ENCODE measurements at regions of chr18 and their contacts with region 1.

Region 1: GRCh38 chr18:63155169-63155852 is 164.3 kb downstream of the BCL2 start:
- DNase-seq: peak; percentile 91
- H3K4me3 Mint-ChIP-seq: peak overlapping the region; percentile 78
- H3K27ac Mint-ChIP-seq: peak overlapping the region; percentile 98
- H3K4me1 Mint-ChIP-seq: peaks cover 98% of the 10 kb centered on the region
- H3K27me3 Mint-ChIP-seq: no peaks in the 10 kb centered on the region

Region 2: DNA sequence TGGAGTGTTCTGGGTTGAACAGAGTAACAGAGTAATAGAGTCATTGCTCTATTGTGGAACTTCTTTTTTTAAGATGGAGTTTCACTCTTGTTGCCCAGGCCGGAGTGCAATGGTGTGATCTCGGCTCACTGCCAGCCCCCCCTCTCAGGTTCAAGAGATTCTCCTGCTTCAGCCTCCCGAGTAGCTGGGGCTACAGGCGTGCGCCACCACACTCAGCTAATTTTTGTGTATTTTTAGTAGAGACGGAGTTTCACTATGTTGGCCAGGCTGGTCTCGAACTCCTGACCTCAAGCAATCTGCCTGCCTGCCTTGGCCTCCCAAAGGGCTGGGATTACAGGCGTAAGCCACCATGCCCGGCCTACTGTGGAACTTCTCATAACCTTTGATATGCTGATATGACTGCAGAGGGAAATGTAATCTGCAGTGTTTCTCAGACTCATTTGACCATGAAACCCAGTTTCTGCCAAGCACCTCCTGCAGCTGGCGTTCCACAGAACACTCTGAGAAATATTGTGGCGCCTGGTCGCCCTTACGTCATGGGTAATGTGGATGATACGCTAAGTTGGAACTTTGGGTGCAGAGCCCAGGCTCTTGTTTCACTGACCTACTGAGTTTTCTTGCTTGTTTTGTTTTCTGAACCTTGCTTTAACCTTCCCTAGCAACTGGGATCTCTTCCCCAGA is 49.5 kb before region 1 on chr18:
- CTCF ChIA-PET with region 1: no interaction called
- POLR2A ChIA-PET with region 1: interaction called, 5 read pairs
- intact Hi-C with region 1: loop called (anchors 2 kb)
- DNase-seq: peak; percentile 31
- H3K4me3 Mint-ChIP-seq: no peak overlapping the region
- H3K27ac Mint-ChIP-seq: no peak overlapping the region
- H3K4me1 Mint-ChIP-seq: peaks cover 33% of the 10 kb centered on the region
- H3K27me3 Mint-ChIP-seq: peaks cover under 1% of the 10 kb centered on the region

Region 3: GRCh38 chr18:63138436-63139340 is 16.6 kb before region 1 on chr18:
- CTCF ChIA-PET with region 1: interaction called, 21 read pairs
- POLR2A ChIA-PET with region 1: interaction called, 13 read pairs
- intact Hi-C with region 1: loop called (anchors 1 kb)
- DNase-seq: peak; percentile 55
- H3K4me3 Mint-ChIP-seq: peak overlapping the region; percentile 76
- H3K27ac Mint-ChIP-seq: peak overlapping the region; percentile 89
- H3K4me1 Mint-ChIP-seq: peaks cover 70% of the 10 kb centered on the region
- H3K27me3 Mint-ChIP-seq: no peaks in the 10 kb centered on the region

Region 4: DNA sequence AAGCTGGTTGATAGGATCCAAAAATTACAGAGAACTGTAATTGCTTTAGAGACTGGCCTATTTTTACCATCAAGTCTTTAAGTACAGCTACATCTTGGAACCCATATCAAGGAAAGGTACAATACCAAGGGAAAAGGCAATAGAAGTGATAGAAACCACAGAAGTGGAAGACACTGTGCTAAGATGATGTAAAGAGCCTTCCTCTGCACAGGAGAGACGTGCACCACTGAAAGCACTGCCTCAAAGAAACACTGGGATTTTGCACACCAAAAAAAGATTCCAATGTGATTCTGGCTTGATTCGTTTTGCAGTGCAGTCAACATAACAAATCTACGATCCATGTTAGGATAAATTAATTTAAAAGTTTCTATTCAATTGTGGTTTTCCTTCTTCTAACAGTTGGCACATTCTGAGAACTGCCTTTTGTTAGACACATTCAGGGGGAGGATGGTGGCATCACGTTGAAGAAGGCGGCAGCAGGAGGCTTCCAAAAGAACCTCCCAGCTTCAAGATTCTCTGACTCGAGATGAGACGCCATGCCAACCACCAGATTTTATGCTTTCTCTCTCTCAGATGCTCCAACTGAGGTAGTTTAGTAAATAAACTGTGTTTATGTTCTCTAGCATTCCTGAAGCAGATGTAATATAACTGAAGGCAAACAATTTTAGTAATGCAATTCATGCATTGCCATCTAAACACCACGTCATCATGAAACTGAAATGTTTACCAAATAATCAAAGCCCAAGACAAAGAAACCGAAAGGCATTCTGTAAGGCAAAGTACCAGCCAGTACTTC is 61.4 kb after region 1 on chr18:
- CTCF ChIA-PET with region 1: interaction called, 6 read pairs
- POLR2A ChIA-PET with region 1: interaction called, 13 read pairs
- intact Hi-C with region 1: loop called (anchors 1 kb)
- DNase-seq: peak; percentile 50
- H3K4me3 Mint-ChIP-seq: peak overlapping the region; percentile 64
- H3K27ac Mint-ChIP-seq: peak overlapping the region; percentile 93
- H3K4me1 Mint-ChIP-seq: peaks cover 95% of the 10 kb centered on the region
- H3K27me3 Mint-ChIP-seq: no peaks in the 10 kb centered on the region

Region 5: GRCh38 chr18:63367053-63367953 is 212.0 kb after region 1 on chr18 and contains the start of gene KDSR:
- CTCF ChIA-PET with region 1: no interaction called
- POLR2A ChIA-PET with region 1: no interaction called
- intact Hi-C with region 1: loop called (anchors 2 kb)
- DNase-seq: peak; percentile 89
- H3K4me3 Mint-ChIP-seq: peak within 1 kb of the TSS; percentile 90
- H3K27ac Mint-ChIP-seq: peak within 1 kb of the TSS; percentile 86
- H3K4me1 Mint-ChIP-seq: peaks cover 29% of the 10 kb centered on the region
- H3K27me3 Mint-ChIP-seq: no peaks in the 10 kb centered on the region
- total RNA-seq, gene KDSR: 72.8 to 77.2 TPM

Measured in activated CD4-positive, alpha-beta memory T cell treated with anti-CD3 and anti-CD28 coated beads for 36 hours (primary cell).